ENCODE measurements at regions of chr22 and their contacts with region 1.

Region 1: GRCh38 chr22:27632451-27633295 is 168.9 kb downstream of the MN1 start:
- DNase-seq: peak; percentile 71 to 87 (median 78)
- ATAC-seq: peak; percentile 70 to 84 (median 82)
- H3K4me3 ChIP-seq: no peak overlapping the region
- H3K27ac ChIP-seq: peak overlapping the region in 4 of 12 donors; percentile 32 to 59 (median 42)
- H3K4me1 ChIP-seq: peaks cover 0 to 29% (median 8%) of the 10 kb centered on the region in 12 donors
- H3K27me3 ChIP-seq: no peaks in the 10 kb centered on the region
- CTCF ChIP-seq: no peak
- POLR2A ChIP-seq: no peak

Region 2: DNA sequence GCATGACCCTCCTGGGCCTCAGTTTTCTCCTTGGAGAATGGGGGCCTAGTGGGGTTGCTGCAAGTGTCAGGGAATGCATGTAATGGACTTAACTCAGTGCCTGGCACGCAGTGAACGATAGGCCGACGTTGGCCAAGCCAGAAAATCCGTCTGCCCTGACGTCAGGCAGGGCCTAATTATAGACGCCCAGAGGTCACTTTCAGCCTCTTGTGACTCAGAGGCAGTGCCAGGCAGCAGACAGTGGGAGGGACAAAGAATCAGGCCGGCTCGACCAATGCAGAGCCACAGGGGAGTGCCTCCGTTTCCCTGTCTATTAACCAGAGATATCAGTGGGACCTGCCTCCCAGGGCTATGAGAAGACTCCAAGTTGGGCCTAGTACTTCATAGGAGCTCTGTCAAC is 53.9 kb after region 1 on chr22:
- intact Hi-C with region 1: loop called in 5 of 10 experiments (anchors 1 to 10 kb)
- DNase-seq: peak; percentile 85 to 94 (median 87)
- ATAC-seq: peak; percentile 93 to 98 (median 96)
- H3K4me3 ChIP-seq: no peak overlapping the region
- H3K27ac ChIP-seq: peak overlapping the region; percentile 70 to 95 (median 83)
- H3K4me1 ChIP-seq: peaks cover 0 to 28% (median 17%) of the 10 kb centered on the region in 12 donors
- H3K27me3 ChIP-seq: no peaks in the 10 kb centered on the region
- CTCF ChIP-seq: no peak
- POLR2A ChIP-seq: peak in 1 of 2 donors; percentile 25

Region 3: GRCh38 chr22:27799334-27800249 is 166.9 kb after region 1 on chr22:
- intact Hi-C with region 1: loop called in 7 of 10 experiments (anchors 5 to 10 kb)
- DNase-seq: peak in 2 of 5 donors; percentile 58 to 66
- ATAC-seq: peak in 3 of 4 donors; percentile 2 to 11 (median 3)
- H3K4me3 ChIP-seq: peak overlapping the region; percentile 59 to 95 (median 80)
- H3K27ac ChIP-seq: peak overlapping the region; percentile 44 to 95 (median 89)
- H3K4me1 ChIP-seq: peaks cover 0 to 68% (median 21%) of the 10 kb centered on the region in 12 donors
- H3K27me3 ChIP-seq: peaks cover 0 to 40% (median 10%) of the 10 kb centered on the region in 9 donors
- CTCF ChIP-seq: no peak
- POLR2A ChIP-seq: no peak

Measured in heart left ventricle (tissue), 16 donors.